Posterior cingulate gyrus (tissue), 11 donors: ENCODE measurements at regions of chr9 and their contacts with region 1.

Region 1: GRCh38 chr9:19379697-19380046 is 364 bp downstream of the RPS6 start:
- DNase-seq: peak in 2 of 10 donors; percentile 15 to 78

Region 2: DNA sequence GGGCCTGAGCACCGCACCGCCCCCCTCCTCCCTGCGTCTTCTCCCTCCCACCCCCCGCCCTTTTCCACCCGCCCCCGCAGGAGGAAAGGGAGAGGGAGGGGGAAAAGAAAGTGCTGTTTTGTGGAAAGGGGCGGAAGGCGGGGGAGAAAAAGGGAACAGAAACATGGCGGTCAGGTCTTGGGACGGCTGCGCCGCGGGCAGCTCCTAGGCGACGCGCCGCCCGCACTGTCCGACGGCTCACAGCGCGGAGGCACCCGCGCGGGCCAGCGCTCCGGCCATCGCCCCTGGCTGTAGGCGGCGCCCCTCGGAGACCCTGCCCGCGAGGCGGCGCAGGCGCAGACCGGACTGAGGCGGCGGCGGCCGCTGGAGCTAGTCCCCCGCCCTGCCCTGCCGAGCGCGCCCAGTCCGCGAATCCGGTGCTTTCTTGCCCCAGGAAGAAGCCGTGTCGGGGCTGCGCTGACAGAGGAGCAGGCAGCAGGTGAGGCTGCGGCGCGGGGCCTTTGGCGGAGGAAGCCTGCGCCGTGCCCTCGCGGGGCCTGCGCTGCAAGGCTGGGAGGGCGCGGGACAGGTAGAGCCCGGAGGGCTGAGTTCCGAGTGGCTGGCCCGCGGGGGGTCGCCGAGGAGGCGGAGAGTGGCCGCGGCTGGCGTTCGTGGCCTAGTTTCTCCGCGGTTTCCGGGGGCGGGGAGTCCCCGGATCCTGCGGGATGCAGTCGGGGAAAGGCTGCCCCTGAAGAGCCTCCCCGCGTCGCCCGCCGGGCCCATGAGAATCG is 149.1 kb before region 1 on chr9 and contains the start of gene DENND4C:
- intact Hi-C with region 1: loop called (anchors 2 kb)
- DNase-seq: peak; percentile 66 to 97 (median 80)

Region 3: DNA sequence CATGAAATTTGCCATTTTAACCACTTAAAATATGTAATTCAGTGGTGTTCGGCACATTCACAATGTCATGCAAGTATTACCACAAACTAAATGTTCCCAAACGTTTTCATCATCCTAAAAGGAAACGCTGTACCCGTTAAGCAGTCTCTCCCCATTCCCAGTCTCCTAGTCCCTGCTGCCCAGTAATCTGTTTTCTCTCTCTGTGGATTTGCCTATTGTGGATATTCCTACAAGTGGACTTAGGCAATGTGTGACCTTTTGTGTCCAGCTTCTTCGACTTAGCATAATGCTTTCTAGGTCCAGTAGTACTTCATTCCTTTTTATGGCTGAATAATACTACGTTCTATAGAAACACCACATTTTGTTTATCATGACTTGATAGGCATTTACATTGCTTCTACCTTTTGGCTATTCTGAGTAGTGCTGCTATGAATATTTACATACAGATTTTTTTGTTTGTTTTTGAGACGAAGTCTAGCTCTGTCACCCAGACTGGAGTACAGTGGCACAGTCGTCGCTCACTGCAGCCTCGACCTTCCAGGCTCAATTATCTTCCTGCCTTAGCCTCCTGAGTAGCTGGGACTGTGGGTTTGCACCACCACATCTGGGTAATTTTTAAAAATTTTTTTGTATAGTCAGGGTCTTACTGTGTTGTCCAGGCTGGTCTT is 136.2 kb before region 1 on chr9:
- intact Hi-C with region 1: no loop called
- DNase-seq: no peak

Region 4: GRCh38 chr9:19408693-19409400 is 29.2 kb after region 1 on chr9 and contains the start of gene ACER2:
- intact Hi-C with region 1: loop called (anchors 2 kb)
- DNase-seq: peak; percentile 87 to 99 (median 94)

Region 5: GRCh38 chr9:19493174-19493811 is 113.6 kb after region 1 on chr9:
- intact Hi-C with region 1: no loop called
- DNase-seq: peak; percentile 63 to 97 (median 74)

Region 6: DNA sequence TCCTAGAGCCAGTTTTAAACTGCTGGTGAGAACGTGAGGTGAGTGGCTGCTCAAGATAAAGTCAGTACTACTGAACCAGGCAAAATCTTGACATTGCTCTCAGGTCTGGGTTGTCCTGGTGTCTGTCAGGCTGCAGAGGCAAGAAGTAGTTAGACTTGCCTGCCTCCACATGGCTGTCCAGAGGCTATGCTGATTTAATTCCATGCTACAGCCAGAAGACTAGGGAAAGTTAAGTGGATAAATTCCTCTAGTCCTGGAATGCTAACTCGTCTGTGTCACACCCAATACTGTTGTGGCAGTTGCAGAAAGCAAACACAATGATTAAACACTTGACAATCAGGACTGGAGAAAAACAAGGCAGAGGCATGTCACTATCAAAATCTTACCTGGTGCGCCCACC is 148.0 kb after region 1 on chr9:
- intact Hi-C with region 1: no loop called
- DNase-seq: no peak